ENCODE measurements at regions of chr4 and their contacts with region 1.

Region 1: DNA sequence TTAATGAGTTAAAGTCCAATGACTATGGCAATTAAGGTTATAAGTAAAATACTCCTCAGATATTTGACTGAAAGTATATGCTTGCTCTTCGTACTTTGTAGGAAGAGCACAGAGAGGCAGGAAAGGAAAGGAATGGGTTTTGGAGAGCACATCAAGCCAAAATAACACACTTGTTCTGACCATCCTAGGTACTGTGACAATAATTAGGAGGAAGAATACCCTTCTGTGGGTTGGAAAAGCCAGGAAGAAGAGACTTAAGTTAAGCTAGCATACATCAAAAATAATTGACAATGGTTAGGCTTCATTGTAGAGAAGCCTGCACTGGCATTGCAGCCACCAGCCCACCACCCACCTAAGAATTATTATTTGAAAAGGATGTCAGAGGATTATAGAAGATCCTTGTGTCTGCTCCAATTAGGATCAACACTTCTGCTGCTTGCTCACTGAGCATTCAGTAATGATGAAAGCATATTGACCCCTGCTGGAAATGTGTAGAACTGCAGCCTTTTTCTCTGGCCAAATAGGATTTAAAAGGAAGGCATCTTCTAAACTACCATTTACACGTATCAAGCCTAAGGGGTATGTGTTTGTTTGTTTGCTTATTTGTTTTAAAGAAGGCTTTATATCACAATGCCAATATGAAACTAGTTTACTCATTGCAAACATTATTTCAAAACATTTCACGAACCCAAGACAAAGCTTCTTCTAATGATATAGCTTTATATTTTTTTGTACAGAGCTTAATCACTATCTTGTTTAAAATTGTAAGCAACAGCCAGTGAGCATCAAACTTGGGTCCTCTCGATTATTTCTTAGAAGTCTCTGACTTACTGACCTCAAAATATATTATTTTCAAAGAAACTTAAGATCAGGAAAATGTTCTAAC is 286.2 kb upstream of the TET2 start:
- DNase-seq: peak; percentile 62
- ATAC-seq: peak; percentile 81
- H3K4me3 ChIP-seq: no peak overlapping the region
- H3K27ac ChIP-seq: no peak overlapping the region
- H3K4me1 ChIP-seq: no peaks in the 10 kb centered on the region
- H3K27me3 ChIP-seq: no peaks in the 10 kb centered on the region
- CTCF ChIP-seq: peak; percentile 84
- EP300 ChIP-seq: no peak
- POLR2A ChIP-seq: no peak
- RAD21 ChIP-seq: peak; percentile 61

Region 2: GRCh38 chr4:103996637-103997036 is 863.8 kb before region 1 on chr4:
- CTCF ChIA-PET with region 1: no interaction called
- POLR2A ChIA-PET with region 1: no interaction called
- in situ Hi-C with region 1: no loop called
- intact Hi-C with region 1: loop called (anchors 5 kb)
- DNase-seq: peak; percentile 45
- ATAC-seq: peak; percentile 74
- H3K4me3 ChIP-seq: no peak overlapping the region
- H3K27ac ChIP-seq: no peak overlapping the region
- H3K4me1 ChIP-seq: no peaks in the 10 kb centered on the region
- H3K27me3 ChIP-seq: no peaks in the 10 kb centered on the region
- CTCF ChIP-seq: no peak
- EP300 ChIP-seq: no peak
- POLR2A ChIP-seq: no peak
- RAD21 ChIP-seq: no peak

Region 3: GRCh38 chr4:104693599-104694201 is 166.8 kb before region 1 on chr4:
- CTCF ChIA-PET with region 1: interaction called, 15 read pairs
- POLR2A ChIA-PET with region 1: no interaction called
- in situ Hi-C with region 1: no loop called
- intact Hi-C with region 1: loop called (anchors 1 kb)
- DNase-seq: peak; percentile 10
- ATAC-seq: no peak
- H3K4me3 ChIP-seq: no peak overlapping the region
- H3K27ac ChIP-seq: no peak overlapping the region
- H3K4me1 ChIP-seq: no peaks in the 10 kb centered on the region
- H3K27me3 ChIP-seq: no peaks in the 10 kb centered on the region
- CTCF ChIP-seq: no peak
- EP300 ChIP-seq: no peak
- POLR2A ChIP-seq: no peak
- RAD21 ChIP-seq: no peak